Activated naive CD4-positive, alpha-beta T cell treated with anti-CD3 and anti-CD28 coated beads for 36 hours (primary cell): ENCODE measurements at regions of chr13 and their contacts with region 1.

Region 1: DNA sequence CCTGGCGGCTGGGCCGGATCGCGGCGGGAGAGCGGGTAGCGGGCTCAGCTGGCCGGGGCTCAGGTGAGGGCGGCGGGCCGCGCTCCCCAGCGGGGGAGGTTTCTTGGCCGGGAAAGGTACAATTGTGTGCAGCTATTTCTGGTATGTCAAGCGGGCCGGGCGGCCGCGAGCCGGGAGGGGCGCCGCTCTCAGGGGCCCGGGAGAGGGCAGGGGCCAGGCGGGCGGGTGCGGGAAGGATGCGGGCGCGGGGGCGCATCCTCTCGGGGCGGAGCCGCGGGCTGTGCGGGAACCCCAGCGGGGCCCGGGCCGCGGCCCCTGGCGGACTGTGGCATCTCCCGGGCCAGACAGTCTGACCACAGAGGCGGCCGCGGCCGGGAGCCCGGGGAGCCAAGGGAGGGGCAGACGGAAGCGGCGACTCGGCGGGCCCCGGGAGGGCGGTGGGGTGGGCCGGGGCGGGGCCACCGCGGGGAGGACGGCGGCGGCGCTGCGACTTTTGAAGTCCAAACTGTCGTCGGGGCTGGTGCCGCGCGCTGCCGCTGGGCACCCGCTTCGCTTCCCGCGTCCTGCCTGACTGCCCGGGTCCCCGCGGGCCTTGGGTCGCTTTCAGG is at the start of gene LMO7:
- DNase-seq: peak; percentile 55
- H3K4me3 Mint-ChIP-seq: peak within 1 kb of the TSS; percentile 75
- H3K27ac Mint-ChIP-seq: no peak within 1 kb of the TSS
- H3K4me1 Mint-ChIP-seq: peaks cover 6% of the 10 kb centered on the region
- H3K27me3 Mint-ChIP-seq: peaks cover 12% of the 10 kb centered on the region
- total RNA-seq, gene LMO7: 10.5 to 12.0 TPM

Region 2: DNA sequence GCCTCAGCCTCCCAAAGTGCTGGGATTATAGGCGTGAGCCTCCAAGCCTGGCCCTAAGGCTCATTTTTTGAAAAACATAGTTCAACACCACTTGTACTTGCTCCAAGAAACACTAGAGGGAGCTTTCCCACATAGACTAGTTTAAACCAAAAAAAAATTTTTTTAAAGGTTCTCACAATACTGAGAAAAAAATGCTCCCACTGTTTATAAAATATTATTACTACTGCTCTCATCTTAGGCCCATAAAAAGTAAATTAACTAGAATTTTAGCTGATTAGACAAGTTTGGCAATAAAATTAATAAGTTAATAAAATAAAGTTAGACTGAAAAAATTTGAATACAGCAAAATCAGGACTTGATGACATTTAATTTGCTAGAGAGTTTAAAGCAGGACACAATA is 263.4 kb before region 1 on chr13:
- CTCF ChIA-PET with region 1: no interaction called
- intact Hi-C with region 1: loop called (anchors 2 kb)
- DNase-seq: no peak
- H3K4me3 Mint-ChIP-seq: no peak overlapping the region
- H3K27ac Mint-ChIP-seq: no peak overlapping the region
- H3K4me1 Mint-ChIP-seq: peaks cover 5% of the 10 kb centered on the region
- H3K27me3 Mint-ChIP-seq: no peaks in the 10 kb centered on the region

Region 3: GRCh38 chr13:75715601-75716523 is 79.9 kb after region 1 on chr13:
- CTCF ChIA-PET with region 1: no interaction called
- intact Hi-C with region 1: no loop called
- DNase-seq: peak; percentile 33
- H3K4me3 Mint-ChIP-seq: no peak overlapping the region
- H3K27ac Mint-ChIP-seq: no peak overlapping the region
- H3K4me1 Mint-ChIP-seq: peaks cover 3% of the 10 kb centered on the region
- H3K27me3 Mint-ChIP-seq: no peaks in the 10 kb centered on the region